ENCODE measurements at regions of chr10 and their contacts with region 1.

Region 1: DNA sequence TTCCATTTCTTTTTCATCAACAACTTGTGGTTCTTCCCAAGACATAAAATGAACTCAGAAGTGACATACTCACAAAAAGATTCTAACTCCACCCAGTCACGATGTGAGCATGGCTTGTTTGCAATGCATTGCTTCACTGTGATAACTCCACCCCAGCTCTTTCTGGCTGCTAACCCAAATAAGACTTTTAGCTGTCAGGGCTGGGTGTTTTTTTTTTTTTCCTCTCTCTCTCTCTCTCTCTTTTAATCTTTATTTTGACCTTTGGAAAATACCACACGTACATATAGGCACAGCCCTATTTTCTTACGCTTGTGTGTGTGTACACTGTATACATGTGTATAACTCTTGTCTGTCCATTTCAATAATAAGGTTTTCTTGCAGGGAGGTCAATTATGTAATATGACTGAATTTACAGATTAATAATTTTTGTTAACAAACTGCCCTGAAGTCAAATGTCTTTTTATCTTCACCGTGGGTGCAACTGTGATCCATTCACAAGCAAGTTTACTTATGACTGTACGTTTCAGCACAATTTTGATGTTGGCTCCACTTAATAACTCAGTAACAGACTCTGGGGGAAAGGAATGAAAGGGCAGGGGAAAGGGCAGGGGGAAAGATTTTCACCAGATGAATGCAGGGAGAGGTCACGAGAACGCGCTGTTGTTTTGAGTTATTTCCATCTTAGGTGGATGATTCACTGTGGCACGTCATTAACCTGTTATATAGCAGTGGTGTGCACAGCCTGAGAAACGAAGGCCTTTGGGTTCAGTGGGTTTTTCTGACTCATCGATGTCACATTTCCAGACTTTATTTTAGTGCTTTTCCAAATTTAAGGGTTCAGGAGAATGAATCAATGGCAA is 49.1 kb downstream of the APBB1IP start:
- DNase-seq: peak; percentile 57 to 58
- H3K4me3 ChIP-seq: no peak overlapping the region
- H3K4me3 Mint-ChIP-seq: peak overlapping the region; percentile 10
- H3K27ac Mint-ChIP-seq: peak overlapping the region; percentile 26
- H3K4me1 ChIP-seq: peaks cover 33% of the 10 kb centered on the region
- H3K4me1 Mint-ChIP-seq: peaks cover 37% of the 10 kb centered on the region
- H3K27me3 ChIP-seq: no peaks in the 10 kb centered on the region
- H3K27me3 Mint-ChIP-seq: no peaks in the 10 kb centered on the region
- CTCF ChIP-seq: no peak

Region 2: DNA sequence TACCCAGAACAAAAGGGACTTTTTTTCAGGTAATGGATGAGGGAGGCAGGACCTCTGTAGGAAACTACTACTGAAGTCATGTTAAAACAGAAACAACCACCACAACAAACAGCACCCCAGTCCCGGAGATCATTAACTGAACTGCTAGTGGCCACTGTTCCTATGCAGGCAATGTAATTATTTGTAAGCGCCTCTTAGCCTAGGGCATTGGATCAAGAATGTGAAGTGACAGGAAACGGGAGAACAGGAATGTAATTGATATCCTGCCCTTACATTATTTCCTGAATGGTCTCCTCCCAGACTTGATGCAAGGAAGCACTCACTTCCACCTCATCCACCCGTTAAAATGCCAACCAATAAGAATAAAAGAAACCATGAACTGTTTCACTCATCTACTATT is 287.4 kb before region 1 on chr10:
- CTCF ChIA-PET with region 1: no interaction called
- POLR2A ChIA-PET with region 1: no interaction called
- intact Hi-C with region 1: no loop called
- DNase-seq: no peak
- H3K4me3 ChIP-seq: no peak overlapping the region
- H3K4me3 Mint-ChIP-seq: no peak overlapping the region
- H3K27ac Mint-ChIP-seq: no peak overlapping the region
- H3K4me1 ChIP-seq: no peaks in the 10 kb centered on the region
- H3K4me1 Mint-ChIP-seq: no peaks in the 10 kb centered on the region
- H3K27me3 ChIP-seq: no peaks in the 10 kb centered on the region
- H3K27me3 Mint-ChIP-seq: peaks cover 5% of the 10 kb centered on the region
- CTCF ChIP-seq: no peak

Region 3: GRCh38 chr10:26221541-26221940 is 265.7 kb before region 1 on chr10:
- CTCF ChIA-PET with region 1: no interaction called
- POLR2A ChIA-PET with region 1: no interaction called
- intact Hi-C with region 1: no loop called
- DNase-seq: no peak
- H3K4me3 ChIP-seq: no peak overlapping the region
- H3K4me3 Mint-ChIP-seq: no peak overlapping the region
- H3K27ac Mint-ChIP-seq: no peak overlapping the region
- H3K4me1 ChIP-seq: peaks cover 9% of the 10 kb centered on the region; the same call in 1 of the 2 replicates
- H3K4me1 Mint-ChIP-seq: peaks cover 14% of the 10 kb centered on the region
- H3K27me3 ChIP-seq: 0 out of 2 replicates have a peak, but pooled peaks cover 3% of the 10 kb centered on the region
- H3K27me3 Mint-ChIP-seq: peaks cover 11% of the 10 kb centered on the region
- CTCF ChIP-seq: no peak

Region 4: GRCh38 chr10:26524161-26524831 is 37.1 kb after region 1 on chr10:
- CTCF ChIA-PET with region 1: no interaction called
- POLR2A ChIA-PET with region 1: no interaction called
- intact Hi-C with region 1: loop called (anchors 5 kb)
- DNase-seq: peak; percentile 67 to 77
- H3K4me3 ChIP-seq: no peak overlapping the region
- H3K4me3 Mint-ChIP-seq: peak overlapping the region; percentile 35
- H3K27ac Mint-ChIP-seq: peak overlapping the region; percentile 99
- H3K4me1 ChIP-seq: peaks cover 26% of the 10 kb centered on the region
- H3K4me1 Mint-ChIP-seq: peaks cover 19% of the 10 kb centered on the region
- H3K27me3 ChIP-seq: no peaks in the 10 kb centered on the region
- H3K27me3 Mint-ChIP-seq: no peaks in the 10 kb centered on the region
- CTCF ChIP-seq: no peak